ENCODE measurements at regions of chr11 and their contacts with region 1.

Region 1: DNA sequence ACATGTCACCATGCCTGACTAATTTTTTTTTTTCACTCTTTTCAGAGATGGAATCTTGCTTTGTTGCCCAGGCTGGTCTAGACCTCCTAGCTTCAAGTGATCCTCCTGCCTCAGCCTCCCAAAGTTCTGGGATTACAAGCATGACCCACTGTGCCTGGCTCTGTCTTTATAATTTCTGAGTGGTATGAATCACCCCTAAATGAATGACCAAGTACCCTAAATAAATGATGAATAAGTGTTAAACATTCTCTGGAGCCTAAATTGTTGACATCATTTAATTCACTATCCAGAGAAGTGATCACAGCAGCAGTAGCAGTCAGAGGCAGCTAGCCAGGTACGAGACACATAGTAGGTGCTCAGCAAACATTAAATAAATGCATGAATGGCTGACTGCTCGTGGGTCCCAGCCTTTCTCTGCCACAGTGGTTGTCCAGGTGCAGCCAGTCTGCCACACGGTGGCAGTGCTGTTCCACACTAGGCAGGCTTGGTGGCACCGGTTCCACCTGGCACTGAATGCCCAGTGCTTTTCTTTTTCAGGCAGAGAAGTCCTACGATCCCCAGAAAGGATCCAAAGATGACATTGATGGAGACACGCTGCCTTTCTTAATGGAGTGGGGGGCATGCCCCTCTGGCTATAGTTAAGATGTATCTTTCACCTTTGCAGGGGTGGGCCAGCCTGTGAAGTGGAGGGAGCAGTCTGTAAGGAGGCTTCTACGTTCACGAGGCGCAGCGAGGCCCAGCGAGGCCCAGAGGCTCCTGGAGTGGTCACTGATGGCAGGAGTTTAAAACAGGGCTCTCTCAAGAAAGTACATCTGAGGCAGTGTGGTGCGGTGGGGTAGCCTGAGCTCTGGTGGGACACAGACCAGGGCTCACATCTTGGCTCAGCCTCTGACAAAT is 8.7 kb upstream of the TTC12 start:
- DNase-seq: peak; percentile 44 to 83 (median 67)
- ATAC-seq: peak; percentile 79
- H3K4me3 ChIP-seq: no peak overlapping the region
- H3K4me3 Mint-ChIP-seq: no peak overlapping the region
- H3K27ac ChIP-seq: no peak overlapping the region
- H3K27ac Mint-ChIP-seq: no peak overlapping the region
- H3K4me1 ChIP-seq: no peaks in the 10 kb centered on the region
- H3K4me1 Mint-ChIP-seq: no peaks in the 10 kb centered on the region
- H3K27me3 ChIP-seq: peaks cover 0 to 2% of the 10 kb centered on the region in 2 experiments
- H3K27me3 Mint-ChIP-seq: peaks cover 8% of the 10 kb centered on the region
- CTCF ChIP-seq: peak; percentile 80

Region 2: DNA sequence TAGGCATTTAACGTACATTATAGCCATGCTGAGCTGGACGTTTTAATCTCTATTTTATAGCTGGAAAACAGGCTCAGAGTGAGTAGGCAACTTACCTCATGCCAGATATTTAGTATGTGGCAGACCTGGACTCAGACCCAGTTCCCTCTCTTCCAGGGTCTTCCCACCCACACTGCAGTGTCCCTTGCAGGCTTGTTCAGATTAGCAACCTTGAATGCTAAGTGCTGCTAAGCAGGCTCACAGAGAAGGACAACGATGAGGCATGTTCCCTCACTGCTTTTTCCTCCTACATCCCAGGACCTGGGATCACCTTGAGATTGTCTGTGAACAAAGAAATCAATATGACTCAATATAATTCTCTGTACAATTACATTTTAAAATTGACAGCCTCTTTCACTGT is 278.9 kb before region 1 on chr11:
- CTCF ChIA-PET with region 1: no interaction called
- POLR2A ChIA-PET with region 1: no interaction called
- intact Hi-C with region 1: no loop called
- DNase-seq: no peak
- ATAC-seq: no peak
- H3K4me3 ChIP-seq: no peak overlapping the region
- H3K4me3 Mint-ChIP-seq: no peak overlapping the region
- H3K27ac ChIP-seq: no peak overlapping the region
- H3K27ac Mint-ChIP-seq: no peak overlapping the region
- H3K4me1 ChIP-seq: no peaks in the 10 kb centered on the region
- H3K4me1 Mint-ChIP-seq: no peaks in the 10 kb centered on the region
- H3K27me3 ChIP-seq: no peaks in the 10 kb centered on the region
- H3K27me3 Mint-ChIP-seq: peaks cover 6% of the 10 kb centered on the region
- CTCF ChIP-seq: no peak

Region 3: DNA sequence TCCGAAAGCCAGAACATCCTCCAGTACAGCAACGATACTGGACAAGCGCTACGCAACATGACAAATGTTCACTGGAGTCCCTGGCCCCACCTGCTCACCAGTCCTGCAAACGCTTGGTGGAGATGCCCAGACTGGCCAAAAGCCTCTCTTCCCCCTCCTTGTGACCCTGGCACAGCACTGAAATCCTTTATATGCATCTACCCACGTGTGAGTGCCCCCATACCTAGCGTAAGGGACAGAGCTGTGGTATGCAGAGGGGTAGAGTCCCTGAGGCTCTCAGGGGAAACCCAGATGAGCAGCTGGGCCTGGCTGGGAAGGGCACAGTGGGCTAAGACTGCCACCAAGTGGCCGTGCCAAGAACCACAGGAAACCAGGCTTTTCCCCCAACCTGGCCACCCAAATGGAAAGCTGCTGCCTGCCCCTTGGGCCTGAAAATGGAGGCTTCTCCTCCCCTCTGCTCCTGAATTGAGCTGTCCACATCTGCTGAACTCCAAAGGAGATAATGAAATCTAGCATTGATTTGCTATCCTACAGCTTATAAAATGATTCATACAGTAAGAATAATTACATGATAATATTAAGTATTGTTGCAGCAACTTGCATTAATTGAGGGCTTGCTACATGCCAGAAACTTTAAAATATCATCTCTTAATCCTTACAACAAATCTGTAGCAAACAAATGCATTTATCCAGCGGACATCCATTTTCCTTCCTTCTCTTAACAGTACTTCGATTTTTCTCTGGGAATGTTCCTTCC is 16.1 kb before region 1 on chr11:
- CTCF ChIA-PET with region 1: interaction called, 15 read pairs
- POLR2A ChIA-PET with region 1: no interaction called
- intact Hi-C with region 1: no loop called
- DNase-seq: peak; percentile 24 to 74 (median 54)
- ATAC-seq: peak; percentile 85
- H3K4me3 ChIP-seq: no peak overlapping the region
- H3K4me3 Mint-ChIP-seq: no peak overlapping the region
- H3K27ac ChIP-seq: no peak overlapping the region
- H3K27ac Mint-ChIP-seq: no peak overlapping the region
- H3K4me1 ChIP-seq: no peaks in the 10 kb centered on the region
- H3K4me1 Mint-ChIP-seq: no peaks in the 10 kb centered on the region
- H3K27me3 ChIP-seq: no peaks in the 10 kb centered on the region
- H3K27me3 Mint-ChIP-seq: peaks cover 24% of the 10 kb centered on the region
- CTCF ChIP-seq: peak; percentile 64

Region 4: DNA sequence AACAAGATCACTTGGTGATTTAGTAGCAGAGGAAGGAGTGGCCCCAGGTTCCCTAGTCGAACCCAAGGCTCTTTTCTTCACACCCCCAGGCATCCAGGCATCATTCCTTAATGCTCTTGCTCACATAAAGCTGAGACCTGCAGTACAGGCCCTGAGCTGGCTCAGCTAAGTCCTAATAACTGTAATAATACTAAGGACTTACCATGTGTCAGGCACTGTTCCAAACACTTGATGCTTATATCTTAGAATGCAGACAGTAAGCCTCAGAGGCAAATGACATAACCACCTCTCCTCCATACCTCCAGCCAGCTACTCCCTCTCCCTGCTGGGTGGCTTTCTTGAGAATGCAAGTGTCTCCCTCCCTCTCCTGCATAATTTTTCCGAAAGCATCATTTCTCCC is 115.1 kb after region 1 on chr11:
- CTCF ChIA-PET with region 1: no interaction called
- POLR2A ChIA-PET with region 1: no interaction called
- intact Hi-C with region 1: no loop called
- DNase-seq: no peak
- ATAC-seq: no peak
- H3K4me3 ChIP-seq: no peak overlapping the region
- H3K4me3 Mint-ChIP-seq: no peak overlapping the region
- H3K27ac ChIP-seq: no peak overlapping the region
- H3K27ac Mint-ChIP-seq: no peak overlapping the region
- H3K4me1 ChIP-seq: no peaks in the 10 kb centered on the region
- H3K4me1 Mint-ChIP-seq: no peaks in the 10 kb centered on the region
- H3K27me3 ChIP-seq: no peaks in the 10 kb centered on the region
- H3K27me3 Mint-ChIP-seq: peaks cover 7% of the 10 kb centered on the region
- CTCF ChIP-seq: no peak

Region 5: DNA sequence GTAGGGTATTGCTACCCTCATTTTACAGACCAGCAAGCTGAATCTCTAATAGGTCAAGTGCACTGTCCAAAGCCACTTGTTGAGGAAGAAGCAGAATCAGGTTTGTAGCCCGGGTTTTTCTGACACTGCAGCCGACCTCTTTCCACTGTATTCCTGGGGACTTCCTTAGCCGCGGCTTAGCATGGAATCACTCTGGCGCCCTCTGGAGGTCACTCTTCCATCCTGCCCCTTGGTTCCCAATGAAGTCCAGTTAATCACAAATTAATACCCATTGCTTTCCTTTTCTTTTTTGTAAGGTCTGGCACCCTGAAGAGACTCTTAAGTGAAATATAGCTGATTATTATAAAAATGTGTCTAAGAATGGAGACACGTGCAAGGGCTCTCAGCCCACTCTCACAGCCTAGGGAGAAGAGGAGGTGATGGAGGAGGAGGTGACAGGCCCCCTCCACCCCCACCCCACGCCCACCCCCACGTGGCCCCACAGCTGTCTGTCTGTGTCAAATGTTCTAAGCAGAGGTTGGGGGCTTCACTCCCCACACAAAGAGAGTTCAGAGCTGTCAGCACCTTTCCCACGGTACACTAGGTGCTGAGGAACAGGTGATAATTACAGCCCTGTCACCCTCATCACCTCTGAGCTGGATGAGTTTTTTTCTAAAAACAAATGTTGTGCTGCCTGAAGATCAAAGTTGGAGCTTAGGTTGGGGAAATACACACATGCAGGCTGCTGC is 227.2 kb after region 1 on chr11:
- CTCF ChIA-PET with region 1: interaction called, 25 read pairs
- POLR2A ChIA-PET with region 1: no interaction called
- intact Hi-C with region 1: loop called in 1 of 2 experiments (anchors 1 kb)
- DNase-seq: peak; percentile 5 to 68 (median 59)
- ATAC-seq: no peak
- H3K4me3 ChIP-seq: no peak overlapping the region
- H3K4me3 Mint-ChIP-seq: no peak overlapping the region
- H3K27ac ChIP-seq: no peak overlapping the region
- H3K27ac Mint-ChIP-seq: no peak overlapping the region
- H3K4me1 ChIP-seq: no peaks in the 10 kb centered on the region
- H3K4me1 Mint-ChIP-seq: peaks cover 4% of the 10 kb centered on the region
- H3K27me3 ChIP-seq: no peaks in the 10 kb centered on the region
- H3K27me3 Mint-ChIP-seq: peaks cover 17% of the 10 kb centered on the region
- CTCF ChIP-seq: peak; percentile 48

Region 6: GRCh38 chr11:113732092-113732491 is 426.4 kb after region 1 on chr11:
- CTCF ChIA-PET with region 1: interaction called, 5 read pairs
- POLR2A ChIA-PET with region 1: no interaction called
- intact Hi-C with region 1: loop called in 1 of 2 experiments (anchors 2 kb)
- DNase-seq: no peak
- ATAC-seq: no peak
- H3K4me3 ChIP-seq: no peak overlapping the region
- H3K4me3 Mint-ChIP-seq: no peak overlapping the region
- H3K27ac ChIP-seq: no peak overlapping the region
- H3K27ac Mint-ChIP-seq: no peak overlapping the region
- H3K4me1 ChIP-seq: no peaks in the 10 kb centered on the region
- H3K4me1 Mint-ChIP-seq: no peaks in the 10 kb centered on the region
- H3K27me3 ChIP-seq: no peaks in the 10 kb centered on the region
- H3K27me3 Mint-ChIP-seq: no peaks in the 10 kb centered on the region
- CTCF ChIP-seq: no peak

Region 7: GRCh38 chr11:113796663-113797259 is 491.1 kb after region 1 on chr11:
- CTCF ChIA-PET with region 1: interaction called, 11 read pairs
- POLR2A ChIA-PET with region 1: no interaction called
- intact Hi-C with region 1: loop called (anchors 1 kb)
- DNase-seq: peak in 3 of 9 experiments; percentile 18 to 50 (median 35)
- ATAC-seq: peak; percentile 57
- H3K4me3 ChIP-seq: no peak overlapping the region
- H3K4me3 Mint-ChIP-seq: no peak overlapping the region
- H3K27ac ChIP-seq: no peak overlapping the region
- H3K27ac Mint-ChIP-seq: no peak overlapping the region
- H3K4me1 ChIP-seq: no peaks in the 10 kb centered on the region
- H3K4me1 Mint-ChIP-seq: no peaks in the 10 kb centered on the region
- H3K27me3 ChIP-seq: no peaks in the 10 kb centered on the region
- H3K27me3 Mint-ChIP-seq: no peaks in the 10 kb centered on the region
- CTCF ChIP-seq: peak; percentile 60

Measured in CD8-positive, alpha-beta T cell (primary cell).